CD4-positive, alpha-beta T cell (primary cell): ENCODE measurements at regions of chr9 and their contacts with region 1.

Region 1: GRCh38 chr9:132240753-132241493 is 79.1 kb downstream of the NTNG2 start:
- DNase-seq: peak; percentile 99 to 100 (median 100)
- ATAC-seq: peak; percentile 86
- H3K4me3 ChIP-seq: peak overlapping the region; percentile 74
- H3K4me3 Mint-ChIP-seq: peak overlapping the region; percentile 99
- H3K27ac ChIP-seq: no peak overlapping the region
- H3K27ac Mint-ChIP-seq: peak overlapping the region; percentile 94
- H3K4me1 ChIP-seq: peaks cover 39% of the 10 kb centered on the region
- H3K4me1 Mint-ChIP-seq: peaks cover 20% of the 10 kb centered on the region
- H3K27me3 ChIP-seq: peaks cover 2 to 6% of the 10 kb centered on the region in 2 experiments
- H3K27me3 Mint-ChIP-seq: peaks cover 4% of the 10 kb centered on the region
- CTCF ChIP-seq: no peak

Region 2: DNA sequence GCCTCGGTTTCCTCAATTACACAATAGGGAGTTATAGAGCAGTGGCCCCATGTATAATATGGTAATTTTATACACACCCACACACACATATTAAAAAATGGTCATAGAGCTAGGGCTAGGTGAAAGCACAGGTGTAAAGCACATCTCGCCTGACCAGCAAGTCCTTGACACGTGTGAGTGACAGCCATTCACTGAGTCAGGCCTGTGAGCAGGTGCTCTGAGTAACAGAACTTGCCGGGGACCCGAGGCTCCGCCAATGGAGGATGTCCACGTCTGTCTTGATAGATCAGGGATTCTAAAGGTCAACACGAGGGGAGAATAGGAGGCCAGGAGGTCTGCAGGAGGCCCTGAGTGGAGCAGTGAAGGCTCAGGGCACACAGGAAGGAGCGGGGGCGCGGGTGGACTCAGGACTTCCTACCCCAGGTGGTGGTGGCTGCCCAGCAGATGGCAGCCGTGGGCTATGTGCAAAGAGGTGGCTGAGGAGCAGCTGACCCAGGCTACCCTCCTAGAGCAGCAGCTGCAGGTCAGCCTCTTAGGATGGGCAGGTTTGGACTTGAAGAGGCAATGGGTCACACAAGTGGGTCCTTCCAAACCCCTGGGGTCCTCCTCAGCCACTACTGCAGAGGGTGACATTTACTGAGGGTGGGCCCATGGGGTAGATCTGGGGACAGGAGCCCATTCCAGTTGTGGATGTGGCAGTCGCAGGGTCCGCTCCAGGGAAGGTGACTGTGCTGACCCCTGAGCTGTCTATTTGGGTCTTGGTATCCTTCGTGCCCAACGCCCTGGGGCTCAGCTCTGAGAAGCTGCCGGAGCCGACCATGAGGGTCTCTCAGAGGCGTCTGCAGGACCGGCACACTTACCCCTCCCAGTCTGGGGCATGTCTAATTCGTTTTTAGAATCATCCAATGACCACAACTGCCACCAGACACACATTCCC is 649.7 kb before region 1 on chr9:
- CTCF ChIA-PET with region 1: no interaction called
- POLR2A ChIA-PET with region 1: no interaction called
- intact Hi-C with region 1: loop called in 1 of 2 experiments (anchors 10 kb)
- DNase-seq: peak; percentile 64 to 87 (median 74)
- ATAC-seq: peak; percentile 89
- H3K4me3 ChIP-seq: no peak overlapping the region
- H3K4me3 Mint-ChIP-seq: no peak overlapping the region
- H3K27ac ChIP-seq: peak overlapping the region; percentile 4 to 34
- H3K27ac Mint-ChIP-seq: peak overlapping the region; percentile 78
- H3K4me1 ChIP-seq: peaks cover 25% of the 10 kb centered on the region
- H3K4me1 Mint-ChIP-seq: peaks cover 29% of the 10 kb centered on the region
- H3K27me3 ChIP-seq: no peaks in the 10 kb centered on the region
- H3K27me3 Mint-ChIP-seq: no peaks in the 10 kb centered on the region
- CTCF ChIP-seq: peak; percentile 83

Region 3: DNA sequence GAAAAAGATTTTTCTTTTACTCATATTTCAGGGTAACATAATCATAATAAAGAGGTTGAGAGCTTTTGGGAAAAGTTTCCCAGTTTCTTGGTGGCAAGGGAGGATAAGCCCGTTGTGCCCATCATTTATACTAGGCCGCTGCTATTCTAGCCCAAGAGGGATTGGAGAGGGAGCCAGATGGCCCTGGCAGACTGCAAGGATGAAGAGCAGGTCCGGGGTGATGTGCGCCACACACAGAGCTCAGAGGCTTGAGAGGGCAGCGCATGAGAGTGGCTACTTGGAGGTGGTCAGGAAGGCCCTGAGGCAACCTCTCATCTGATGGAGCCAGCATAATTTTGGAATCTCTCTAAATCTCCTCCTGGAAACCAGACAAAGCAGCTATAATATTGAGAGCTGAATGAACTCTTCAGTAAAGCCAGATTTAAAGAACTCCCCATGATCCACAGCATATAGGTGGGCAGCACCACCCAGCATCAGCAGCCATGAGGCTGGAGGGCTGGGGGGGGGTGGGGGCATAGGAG is 271.4 kb before region 1 on chr9:
- CTCF ChIA-PET with region 1: no interaction called
- POLR2A ChIA-PET with region 1: no interaction called
- intact Hi-C with region 1: no loop called
- DNase-seq: no peak
- ATAC-seq: no peak
- H3K4me3 ChIP-seq: no peak overlapping the region
- H3K4me3 Mint-ChIP-seq: no peak overlapping the region
- H3K27ac ChIP-seq: no peak overlapping the region
- H3K27ac Mint-ChIP-seq: no peak overlapping the region
- H3K4me1 ChIP-seq: no peaks in the 10 kb centered on the region
- H3K4me1 Mint-ChIP-seq: no peaks in the 10 kb centered on the region
- H3K27me3 ChIP-seq: no peaks in the 10 kb centered on the region
- H3K27me3 Mint-ChIP-seq: no peaks in the 10 kb centered on the region
- CTCF ChIP-seq: no peak

Region 4: DNA sequence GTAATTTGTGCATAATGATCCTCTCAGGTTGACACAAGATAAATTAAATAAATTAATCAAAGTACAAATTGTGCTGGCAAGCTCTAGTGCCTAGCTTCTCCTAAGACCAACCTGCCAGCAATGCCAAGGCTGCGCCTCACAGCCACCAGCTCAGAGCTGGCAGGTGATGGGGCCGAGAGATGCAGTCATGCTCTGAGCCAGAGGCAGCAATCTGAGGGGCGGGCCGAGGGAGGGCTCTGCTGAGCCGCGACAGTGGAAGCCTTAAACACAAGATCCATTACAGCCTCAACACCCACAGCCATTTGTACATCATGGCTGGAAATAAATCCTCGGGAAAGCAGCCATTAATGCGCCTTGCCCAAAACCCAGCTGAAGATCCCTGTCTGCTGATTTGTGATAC is 181.6 kb before region 1 on chr9:
- CTCF ChIA-PET with region 1: no interaction called
- POLR2A ChIA-PET with region 1: no interaction called
- intact Hi-C with region 1: no loop called
- DNase-seq: no peak
- ATAC-seq: no peak
- H3K4me3 ChIP-seq: no peak overlapping the region
- H3K4me3 Mint-ChIP-seq: no peak overlapping the region
- H3K27ac ChIP-seq: no peak overlapping the region
- H3K27ac Mint-ChIP-seq: no peak overlapping the region
- H3K4me1 ChIP-seq: no peaks in the 10 kb centered on the region
- H3K4me1 Mint-ChIP-seq: peaks cover 39% of the 10 kb centered on the region
- H3K27me3 ChIP-seq: no peaks in the 10 kb centered on the region
- H3K27me3 Mint-ChIP-seq: no peaks in the 10 kb centered on the region
- CTCF ChIP-seq: no peak

Region 5: DNA sequence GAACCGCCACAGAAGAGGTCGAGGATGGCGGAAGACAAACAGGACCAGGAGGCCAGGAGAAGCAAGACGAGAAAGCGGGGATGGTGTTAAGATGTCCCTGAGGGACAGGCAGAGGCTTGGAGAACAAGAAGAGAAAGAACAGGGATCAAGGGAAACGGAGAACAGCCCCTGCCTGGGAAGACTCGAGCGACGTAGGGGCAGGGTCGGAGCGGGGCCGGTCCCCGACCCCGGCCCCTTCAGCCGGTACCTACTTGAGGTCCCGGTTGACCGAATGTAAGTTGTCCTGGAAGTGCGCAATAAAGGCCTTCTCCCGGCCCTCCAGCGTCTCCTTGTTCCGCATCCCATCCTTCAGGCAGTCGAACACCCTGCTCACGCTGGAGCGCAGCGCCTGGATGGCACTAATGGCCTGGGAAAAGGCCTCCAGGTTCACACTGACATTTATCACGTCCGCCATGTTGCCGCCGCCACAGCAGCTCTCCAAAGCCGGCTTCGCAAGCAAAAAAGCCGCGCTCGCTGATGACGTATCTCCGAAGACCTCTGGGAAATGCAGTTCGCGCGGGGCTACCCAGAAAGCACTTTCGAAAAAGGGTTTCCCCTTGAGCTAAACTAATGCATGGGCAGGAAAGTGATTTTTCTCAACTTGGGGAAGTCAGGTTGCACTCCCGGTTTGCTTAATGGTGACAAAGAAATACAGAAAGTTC is 161.4 kb before region 1 on chr9 and contains the start of gene MED27:
- CTCF ChIA-PET with region 1: no interaction called
- POLR2A ChIA-PET with region 1: interaction called, 7 read pairs
- intact Hi-C with region 1: loop called in 1 of 2 experiments (anchors 5 kb)
- DNase-seq: peak; percentile 81 to 96 (median 92)
- ATAC-seq: peak; percentile 98
- H3K4me3 ChIP-seq: peak within 1 kb of the TSS; percentile 88
- H3K4me3 Mint-ChIP-seq: peak within 1 kb of the TSS; percentile 91
- H3K27ac ChIP-seq: peak within 1 kb of the TSS in 1 of 2 donors; percentile 11
- H3K27ac Mint-ChIP-seq: peak within 1 kb of the TSS; percentile 68
- H3K4me1 ChIP-seq: peaks cover 19% of the 10 kb centered on the region
- H3K4me1 Mint-ChIP-seq: peaks cover 47% of the 10 kb centered on the region
- H3K27me3 ChIP-seq: peaks cover 0 to 2% of the 10 kb centered on the region in 2 experiments
- H3K27me3 Mint-ChIP-seq: peaks cover 11% of the 10 kb centered on the region
- CTCF ChIP-seq: no peak
- total RNA-seq, gene MED27: 15.0 to 17.4 TPM

Region 6: GRCh38 chr9:132169672-132170392 is 71.1 kb before region 1 on chr9:
- CTCF ChIA-PET with region 1: interaction called, 9 read pairs
- POLR2A ChIA-PET with region 1: interaction called, 7 read pairs
- intact Hi-C with region 1: loop called (anchors 1 kb)
- DNase-seq: peak; percentile 24 to 78 (median 50)
- ATAC-seq: peak; percentile 52
- H3K4me3 ChIP-seq: no peak overlapping the region
- H3K4me3 Mint-ChIP-seq: no peak overlapping the region
- H3K27ac ChIP-seq: no peak overlapping the region
- H3K27ac Mint-ChIP-seq: no peak overlapping the region
- H3K4me1 ChIP-seq: no peaks in the 10 kb centered on the region
- H3K4me1 Mint-ChIP-seq: no peaks in the 10 kb centered on the region
- H3K27me3 ChIP-seq: peaks cover 20 to 33% of the 10 kb centered on the region in 2 experiments
- H3K27me3 Mint-ChIP-seq: peaks cover 56% of the 10 kb centered on the region
- CTCF ChIP-seq: peak; percentile 93

Region 7: GRCh38 chr9:132260846-132261245 is 19.9 kb after region 1 on chr9:
- CTCF ChIA-PET with region 1: interaction called, 13 read pairs
- POLR2A ChIA-PET with region 1: interaction called, 8 read pairs
- intact Hi-C with region 1: no loop called
- DNase-seq: no peak
- ATAC-seq: no peak
- H3K4me3 ChIP-seq: no peak overlapping the region
- H3K4me3 Mint-ChIP-seq: no peak overlapping the region
- H3K27ac ChIP-seq: no peak overlapping the region
- H3K27ac Mint-ChIP-seq: no peak overlapping the region
- H3K4me1 ChIP-seq: peaks cover 12% of the 10 kb centered on the region
- H3K4me1 Mint-ChIP-seq: peaks cover 9% of the 10 kb centered on the region
- H3K27me3 ChIP-seq: no peaks in the 10 kb centered on the region
- H3K27me3 Mint-ChIP-seq: no peaks in the 10 kb centered on the region
- CTCF ChIP-seq: no peak

Region 8: DNA sequence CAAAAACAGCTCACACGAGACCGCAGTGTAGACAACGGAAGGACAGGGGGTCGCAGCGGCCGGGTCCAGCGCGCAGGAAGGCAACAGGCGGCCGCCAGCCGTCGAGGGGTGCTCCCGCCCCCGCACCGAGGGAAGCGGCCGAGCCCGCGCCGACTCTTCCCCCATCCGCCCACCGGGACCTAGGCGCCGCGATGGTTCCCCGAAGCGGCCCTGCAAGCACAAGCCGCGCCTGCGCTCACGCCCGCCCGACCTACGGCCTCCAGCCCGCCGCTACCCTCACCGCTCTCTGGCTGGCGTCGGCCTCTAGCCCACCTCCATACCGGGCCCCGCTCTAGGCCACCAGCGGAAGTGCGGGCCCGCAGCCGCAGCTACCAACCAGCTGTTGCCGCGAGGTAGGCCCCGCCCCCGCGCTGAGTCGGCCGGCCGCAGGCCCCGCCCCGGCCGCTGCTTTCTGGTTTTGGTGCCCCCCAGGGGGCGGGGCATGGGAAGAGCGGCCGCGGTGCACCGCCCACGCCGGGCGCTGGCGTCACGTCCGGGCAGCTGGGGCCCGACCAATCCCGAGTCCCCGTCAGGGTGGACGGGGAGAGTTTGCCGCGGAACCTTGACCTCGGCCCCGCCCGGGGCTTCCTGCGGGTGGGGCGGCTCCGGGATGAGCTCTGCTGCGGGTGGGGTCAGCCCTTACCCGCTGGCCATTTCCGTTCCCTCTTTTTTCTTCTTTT is 113.9 kb after region 1 on chr9 and contains the start of gene SETX:
- CTCF ChIA-PET with region 1: no interaction called
- POLR2A ChIA-PET with region 1: interaction called, 12 read pairs
- intact Hi-C with region 1: loop called (anchors 1 to 10 kb)
- DNase-seq: peak; percentile 88 to 99 (median 96)
- ATAC-seq: peak; percentile 82
- H3K4me3 ChIP-seq: peak within 1 kb of the TSS; percentile 74
- H3K4me3 Mint-ChIP-seq: peak within 1 kb of the TSS; percentile 94
- H3K27ac ChIP-seq: peak within 1 kb of the TSS; percentile 91 to 96
- H3K27ac Mint-ChIP-seq: peak within 1 kb of the TSS; percentile 91
- H3K4me1 ChIP-seq: peaks cover 41% of the 10 kb centered on the region
- H3K4me1 Mint-ChIP-seq: peaks cover 47% of the 10 kb centered on the region
- H3K27me3 ChIP-seq: no peaks in the 10 kb centered on the region
- H3K27me3 Mint-ChIP-seq: no peaks in the 10 kb centered on the region
- CTCF ChIP-seq: no peak
- total RNA-seq, gene SETX: 36.1 to 37.7 TPM